Right cardiac atrium (tissue), 5 donors: ENCODE measurements at regions of chr12 and their contacts with region 1.

Region 1: DNA sequence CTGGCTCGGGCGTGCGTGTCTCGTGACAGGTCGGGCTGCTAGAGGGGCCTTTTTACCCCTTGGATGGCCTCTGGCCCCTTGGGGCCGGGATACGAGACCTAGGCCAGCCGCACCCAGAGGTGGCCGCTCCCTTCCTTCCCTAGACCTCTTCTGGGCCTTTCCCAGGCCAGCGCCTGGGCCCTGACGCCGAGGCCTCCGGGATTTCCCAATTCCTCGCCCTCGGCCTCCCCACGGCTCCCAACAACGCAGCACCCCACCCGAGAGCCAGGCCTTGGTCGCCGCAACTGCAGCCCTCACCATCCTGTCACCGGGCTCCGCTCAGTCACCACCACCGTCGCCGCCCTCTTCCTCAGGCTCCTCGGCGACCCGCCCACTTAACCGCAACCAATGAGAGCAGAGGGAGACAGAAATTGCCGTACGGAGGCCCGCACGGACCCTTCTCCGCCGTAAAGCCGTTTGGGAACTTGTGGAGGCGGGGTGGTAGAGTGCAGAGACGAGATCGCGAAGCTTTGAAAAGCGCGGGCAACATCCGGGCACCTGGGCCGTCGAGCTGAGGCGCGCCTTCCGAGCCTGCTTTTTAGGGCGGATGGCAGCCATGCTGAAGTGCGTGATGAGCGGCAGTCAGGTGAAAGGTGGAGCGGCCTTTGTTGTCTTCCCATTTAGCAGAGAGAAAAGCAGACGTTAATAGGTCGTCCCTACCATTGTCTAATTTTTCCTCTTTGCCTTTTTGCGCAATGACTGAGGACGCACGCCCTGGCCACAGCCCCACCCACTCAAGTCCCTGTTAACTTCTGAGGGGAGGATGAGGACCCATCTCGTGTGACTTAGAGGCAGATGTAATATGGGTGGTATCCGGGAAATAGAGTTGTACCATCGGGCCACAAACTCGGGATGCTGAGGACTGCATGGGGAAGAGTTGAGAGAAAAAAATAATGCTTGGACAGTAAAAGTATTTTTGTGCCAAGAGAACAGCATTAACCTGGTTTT is at the starts of genes RAD9B and VPS29:
- DNase-seq: peak; percentile 98 to 99 (median 99)
- ATAC-seq: peak; percentile 98 to 99
- H3K4me3 ChIP-seq: peak within 1 kb of the TSS; percentile 86
- H3K27ac ChIP-seq: peak within 1 kb of the TSS; percentile 65
- H3K4me1 ChIP-seq: peaks cover 3% of the 10 kb centered on the region
- H3K27me3 ChIP-seq: no peaks in the 10 kb centered on the region
- total RNA-seq, gene RAD9B: 0.82 to 3.8 (median 1.8) TPM
- total RNA-seq, gene VPS29: 74.3 to 107 (median 85.0) TPM

Region 2: DNA sequence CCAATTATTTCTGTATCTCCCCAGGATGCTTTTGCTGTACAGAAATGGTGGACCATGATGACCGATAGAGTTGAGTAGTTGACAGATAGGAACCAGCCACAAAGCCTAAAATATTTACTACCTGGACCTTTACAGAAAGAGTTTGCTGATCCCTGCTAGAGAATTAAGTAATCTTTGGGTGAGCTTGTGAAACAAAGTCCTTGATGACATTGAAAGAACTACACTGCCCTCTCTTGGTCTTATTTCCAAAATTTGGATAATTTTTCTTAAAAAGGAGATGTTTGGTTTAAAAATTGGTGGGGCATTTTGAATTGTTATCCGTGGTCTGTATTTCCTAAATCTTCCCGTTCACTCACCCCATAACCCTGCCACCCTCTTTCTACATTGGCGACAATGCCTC is 98.2 kb after region 1 on chr12:
- intact Hi-C with region 1: no loop called
- DNase-seq: no peak
- ATAC-seq: no peak
- H3K4me3 ChIP-seq: no peak overlapping the region
- H3K27ac ChIP-seq: no peak overlapping the region
- H3K4me1 ChIP-seq: peaks cover 2% of the 10 kb centered on the region
- H3K27me3 ChIP-seq: no peaks in the 10 kb centered on the region

Region 3: GRCh38 chr12:110647631-110648040 is 145.6 kb after region 1 on chr12:
- intact Hi-C with region 1: no loop called
- DNase-seq: no peak
- ATAC-seq: no peak
- H3K4me3 ChIP-seq: no peak overlapping the region
- H3K27ac ChIP-seq: no peak overlapping the region
- H3K4me1 ChIP-seq: no peaks in the 10 kb centered on the region
- H3K27me3 ChIP-seq: no peaks in the 10 kb centered on the region

Region 4: GRCh38 chr12:110826592-110827200 is 324.7 kb after region 1 on chr12:
- intact Hi-C with region 1: loop called in 1 of 4 experiments (anchors 10 kb)
- DNase-seq: peak; percentile 84 to 96 (median 92)
- ATAC-seq: peak; percentile 93
- H3K4me3 ChIP-seq: no peak overlapping the region
- H3K27ac ChIP-seq: no peak overlapping the region
- H3K4me1 ChIP-seq: no peaks in the 10 kb centered on the region
- H3K27me3 ChIP-seq: no peaks in the 10 kb centered on the region